ENCODE measurements at regions of chr11 and their contacts with region 1.

Region 1: DNA sequence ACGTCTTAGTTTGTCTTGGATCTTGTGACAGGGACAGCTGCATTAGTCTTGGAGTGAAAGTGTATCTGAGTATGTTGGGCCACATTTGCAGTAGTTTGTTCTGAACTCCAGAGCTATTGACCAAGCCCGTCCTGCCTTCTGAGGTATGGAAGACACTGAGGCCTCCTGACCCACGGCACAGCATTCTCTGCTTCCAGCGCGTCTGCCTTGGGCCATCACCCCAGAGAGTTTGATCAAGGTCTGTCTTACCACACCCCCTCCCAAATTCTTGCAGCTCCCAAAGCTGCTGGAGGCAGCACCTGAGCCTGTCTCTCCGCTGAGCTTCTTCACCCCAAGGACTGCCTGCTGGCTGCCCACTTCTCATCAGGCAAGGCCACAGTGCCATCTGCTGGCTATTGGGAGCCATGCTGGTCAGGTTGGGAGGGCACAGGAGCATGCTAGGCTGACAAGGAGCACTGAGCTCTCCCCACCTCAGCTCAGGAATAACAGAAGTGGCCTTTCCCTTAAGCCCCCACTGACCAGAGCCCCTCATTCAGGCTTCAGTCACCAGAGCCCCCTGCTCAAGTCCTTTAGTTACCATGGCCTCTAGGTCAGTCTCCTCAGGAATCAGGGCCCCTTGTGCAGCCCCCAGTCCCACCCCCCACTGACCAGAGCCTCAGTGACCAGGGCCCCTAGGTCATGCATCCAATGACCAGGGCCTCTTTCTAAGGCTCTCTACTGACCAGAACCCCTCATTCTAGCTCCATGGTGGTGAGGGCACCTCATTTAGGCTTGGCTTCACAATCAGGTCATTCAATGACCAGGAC is 27.2 kb upstream of the SMPD1 start:
- DNase-seq: peak; percentile 85
- ATAC-seq: peak; percentile 98
- H3K4me3 Mint-ChIP-seq: no peak overlapping the region
- H3K27ac Mint-ChIP-seq: no peak overlapping the region
- H3K4me1 Mint-ChIP-seq: no peaks in the 10 kb centered on the region
- H3K27me3 Mint-ChIP-seq: no peaks in the 10 kb centered on the region
- CTCF ChIP-seq: peak; percentile 74

Region 2: GRCh38 chr11:6022956-6023355 is 340.1 kb before region 1 on chr11:
- CTCF ChIA-PET with region 1: interaction called, 12 read pairs
- POLR2A ChIA-PET with region 1: no interaction called
- intact Hi-C with region 1: loop called (anchors 10 kb)
- DNase-seq: peak; percentile 5
- ATAC-seq: peak; percentile 49
- H3K4me3 Mint-ChIP-seq: no peak overlapping the region
- H3K27ac Mint-ChIP-seq: no peak overlapping the region
- H3K4me1 Mint-ChIP-seq: no peaks in the 10 kb centered on the region
- H3K27me3 Mint-ChIP-seq: peaks cover 27% of the 10 kb centered on the region
- CTCF ChIP-seq: peak; percentile 44

Region 3: DNA sequence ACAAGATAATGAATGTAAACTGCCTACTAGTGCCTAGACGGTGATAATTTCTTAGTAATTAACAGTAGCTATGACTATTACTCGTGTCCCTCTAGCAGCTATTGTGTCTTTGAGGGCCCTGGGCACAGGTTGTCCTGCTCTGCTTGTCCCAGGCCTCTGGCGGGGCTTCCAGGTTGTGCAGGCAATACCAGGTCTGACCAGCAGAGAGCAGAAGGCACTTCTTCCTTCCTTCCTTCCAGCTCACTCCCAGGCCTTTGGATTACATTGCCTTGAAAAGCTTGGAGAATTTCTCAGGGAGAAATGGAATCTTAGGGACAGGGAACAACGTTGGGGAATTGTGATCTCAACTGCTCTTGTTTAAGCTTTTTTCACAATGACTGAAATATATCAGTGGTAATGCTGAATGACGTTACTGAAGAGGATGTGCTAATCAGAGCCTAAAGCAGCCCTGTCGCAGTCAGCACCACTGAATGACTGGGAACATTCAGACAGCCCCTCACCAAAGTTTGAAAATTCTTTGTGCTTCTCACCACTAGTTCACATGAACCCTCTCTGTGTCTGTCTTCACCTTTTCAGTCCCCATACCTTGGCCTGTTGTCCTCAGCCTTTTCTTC is 111.8 kb before region 1 on chr11:
- CTCF ChIA-PET with region 1: interaction called, 70 read pairs
- POLR2A ChIA-PET with region 1: no interaction called
- intact Hi-C with region 1: no loop called
- DNase-seq: peak; percentile 73
- ATAC-seq: peak; percentile 96
- H3K4me3 Mint-ChIP-seq: no peak overlapping the region
- H3K27ac Mint-ChIP-seq: no peak overlapping the region
- H3K4me1 Mint-ChIP-seq: no peaks in the 10 kb centered on the region
- H3K27me3 Mint-ChIP-seq: no peaks in the 10 kb centered on the region
- CTCF ChIP-seq: peak; percentile 87

Region 4: GRCh38 chr11:6285019-6285418 is 78.1 kb before region 1 on chr11:
- CTCF ChIA-PET with region 1: interaction called, 14 read pairs
- POLR2A ChIA-PET with region 1: no interaction called
- intact Hi-C with region 1: no loop called
- DNase-seq: no peak
- ATAC-seq: no peak
- H3K4me3 Mint-ChIP-seq: no peak overlapping the region
- H3K27ac Mint-ChIP-seq: no peak overlapping the region
- H3K4me1 Mint-ChIP-seq: no peaks in the 10 kb centered on the region
- H3K27me3 Mint-ChIP-seq: peaks cover 45% of the 10 kb centered on the region
- CTCF ChIP-seq: no peak

Region 5: GRCh38 chr11:6303661-6304060 is 59.4 kb before region 1 on chr11:
- CTCF ChIA-PET with region 1: interaction called, 24 read pairs
- POLR2A ChIA-PET with region 1: no interaction called
- intact Hi-C with region 1: no loop called
- DNase-seq: no peak
- ATAC-seq: no peak
- H3K4me3 Mint-ChIP-seq: no peak overlapping the region
- H3K27ac Mint-ChIP-seq: no peak overlapping the region
- H3K4me1 Mint-ChIP-seq: no peaks in the 10 kb centered on the region
- H3K27me3 Mint-ChIP-seq: peaks cover 19% of the 10 kb centered on the region
- CTCF ChIP-seq: no peak

Region 6: GRCh38 chr11:6321961-6322362 is 41.1 kb before region 1 on chr11:
- CTCF ChIA-PET with region 1: interaction called, 20 read pairs
- POLR2A ChIA-PET with region 1: no interaction called
- intact Hi-C with region 1: no loop called
- DNase-seq: peak; percentile 35
- ATAC-seq: peak; percentile 50
- H3K4me3 Mint-ChIP-seq: peak overlapping the region; percentile 5
- H3K27ac Mint-ChIP-seq: peak overlapping the region; percentile 80
- H3K4me1 Mint-ChIP-seq: peaks cover 39% of the 10 kb centered on the region
- H3K27me3 Mint-ChIP-seq: peaks cover 35% of the 10 kb centered on the region
- CTCF ChIP-seq: no peak

Region 7: GRCh38 chr11:6443269-6444003 is 80.4 kb after region 1 on chr11:
- CTCF ChIA-PET with region 1: interaction called, 40 read pairs
- POLR2A ChIA-PET with region 1: no interaction called
- intact Hi-C with region 1: no loop called
- DNase-seq: peak; percentile 67
- ATAC-seq: peak; percentile 90
- H3K4me3 Mint-ChIP-seq: no peak overlapping the region
- H3K27ac Mint-ChIP-seq: no peak overlapping the region
- H3K4me1 Mint-ChIP-seq: no peaks in the 10 kb centered on the region
- H3K27me3 Mint-ChIP-seq: no peaks in the 10 kb centered on the region
- CTCF ChIP-seq: peak; percentile 96

Region 8: DNA sequence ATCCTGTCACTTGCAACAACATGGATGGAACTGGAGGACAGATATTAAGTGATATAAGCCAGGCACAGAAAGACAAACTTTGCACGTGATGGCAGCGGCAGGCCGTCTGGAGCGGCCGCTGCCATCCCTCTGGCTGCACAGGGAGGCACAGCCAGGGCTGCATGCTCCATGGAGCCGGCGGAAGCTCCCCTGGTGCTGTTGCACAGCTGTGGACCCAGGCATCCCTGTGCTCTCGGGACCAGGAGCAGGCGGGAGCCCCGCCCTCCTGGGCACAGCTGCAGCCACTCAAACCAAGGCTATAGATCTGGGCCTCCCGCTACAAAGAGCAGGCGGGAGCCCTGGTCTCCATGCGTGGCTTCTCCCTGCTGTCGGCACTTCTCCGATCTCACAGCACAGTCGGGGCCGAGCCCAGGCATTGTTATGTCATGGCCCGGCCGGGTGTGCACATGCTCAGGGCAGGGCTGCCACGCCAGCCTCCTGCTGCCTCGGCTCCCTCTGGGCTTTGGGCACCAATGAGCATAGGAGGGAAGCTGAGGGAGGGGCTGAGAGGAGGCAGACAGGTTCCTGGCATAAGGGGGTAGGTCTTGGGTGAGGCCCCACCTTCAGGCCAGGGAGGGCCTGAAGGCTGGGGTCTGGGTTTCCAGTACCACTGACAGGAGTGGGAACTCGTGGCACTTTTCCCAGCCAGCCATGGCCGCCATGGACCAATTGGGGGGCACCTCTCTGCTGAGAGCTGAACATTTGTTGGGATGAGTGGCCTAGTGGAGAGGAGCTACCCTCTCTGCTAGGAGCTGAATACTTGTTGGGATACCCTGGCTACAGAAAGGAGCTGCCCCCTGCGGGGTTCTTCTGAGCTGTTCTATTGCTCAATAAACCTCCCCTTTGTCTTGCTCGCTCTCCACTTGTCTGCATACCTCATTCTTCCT is 223.6 kb after region 1 on chr11:
- CTCF ChIA-PET with region 1: no interaction called
- POLR2A ChIA-PET with region 1: no interaction called
- intact Hi-C with region 1: no loop called
- DNase-seq: no peak
- ATAC-seq: no peak
- H3K4me3 Mint-ChIP-seq: no peak overlapping the region
- H3K27ac Mint-ChIP-seq: no peak overlapping the region
- H3K4me1 Mint-ChIP-seq: no peaks in the 10 kb centered on the region
- H3K27me3 Mint-ChIP-seq: no peaks in the 10 kb centered on the region
- CTCF ChIP-seq: no peak

Region 9: GRCh38 chr11:6667733-6668374 is 304.8 kb after region 1 on chr11:
- CTCF ChIA-PET with region 1: no interaction called
- POLR2A ChIA-PET with region 1: no interaction called
- intact Hi-C with region 1: no loop called
- DNase-seq: peak; percentile 59
- ATAC-seq: peak; percentile 78
- H3K4me3 Mint-ChIP-seq: no peak overlapping the region
- H3K27ac Mint-ChIP-seq: peak overlapping the region; percentile 73
- H3K4me1 Mint-ChIP-seq: peaks cover 57% of the 10 kb centered on the region
- H3K27me3 Mint-ChIP-seq: no peaks in the 10 kb centered on the region
- CTCF ChIP-seq: peak; percentile 75

Measured in activated CD8-positive, alpha-beta T cell treated with anti-CD3 and anti-CD28 coated beads for 36 hours (primary cell).